CD8-positive, alpha-beta T cell (primary cell): ENCODE measurements at regions of chr6 and their contacts with region 1.

Region 1: DNA sequence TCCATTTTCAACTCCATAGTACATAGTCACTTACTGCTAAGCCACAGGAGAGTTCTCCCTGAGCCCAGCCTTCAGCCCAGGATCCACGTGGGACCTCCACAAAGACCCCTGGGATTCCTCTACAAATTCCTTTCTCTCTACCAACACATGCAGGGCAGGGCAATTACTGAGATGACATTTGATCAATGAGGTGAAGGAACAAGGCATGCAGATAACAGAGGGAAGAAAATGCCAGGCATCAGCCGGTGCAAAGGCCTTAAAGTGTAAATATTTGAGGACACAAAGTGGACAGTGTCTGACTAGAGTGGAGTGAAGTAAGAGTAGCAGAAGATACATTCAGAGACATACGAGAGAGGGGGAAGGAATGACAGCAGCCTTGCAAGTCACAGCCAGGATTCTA is 70.2 kb downstream of the HS3ST5 start:
- DNase-seq: no peak
- ATAC-seq: no peak
- H3K4me3 ChIP-seq: no peak overlapping the region
- H3K4me3 Mint-ChIP-seq: no peak overlapping the region
- H3K27ac ChIP-seq: no peak overlapping the region
- H3K27ac Mint-ChIP-seq: no peak overlapping the region
- H3K4me1 ChIP-seq: no peaks in the 10 kb centered on the region
- H3K4me1 Mint-ChIP-seq: no peaks in the 10 kb centered on the region
- H3K27me3 ChIP-seq: no peaks in the 10 kb centered on the region
- H3K27me3 Mint-ChIP-seq: no peaks in the 10 kb centered on the region
- CTCF ChIP-seq: no peak

Region 2: DNA sequence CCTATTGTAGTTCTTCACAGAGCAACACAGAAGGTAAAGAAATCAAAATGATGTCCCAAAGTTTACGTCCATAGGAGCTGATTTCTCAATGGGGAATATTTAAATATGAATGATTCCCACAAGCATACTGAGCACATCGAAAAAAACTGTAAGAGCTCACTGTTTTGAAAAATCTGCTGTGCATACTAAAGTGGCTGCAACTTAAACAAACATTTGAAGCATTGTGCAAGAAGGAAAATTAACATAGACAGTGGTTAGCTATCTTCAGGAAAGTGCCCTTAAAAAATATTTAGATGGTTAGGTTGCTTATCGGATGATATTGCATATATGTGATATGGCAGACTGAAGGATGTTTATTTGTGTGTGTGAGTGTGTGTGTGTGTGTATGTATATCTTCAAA is 1177.8 kb before region 1 on chr6:
- CTCF ChIA-PET with region 1: no interaction called
- POLR2A ChIA-PET with region 1: no interaction called
- intact Hi-C with region 1: loop called in 1 of 2 experiments (anchors 5 kb)
- DNase-seq: no peak
- ATAC-seq: no peak
- H3K4me3 ChIP-seq: no peak overlapping the region
- H3K4me3 Mint-ChIP-seq: no peak overlapping the region
- H3K27ac ChIP-seq: no peak overlapping the region
- H3K27ac Mint-ChIP-seq: no peak overlapping the region
- H3K4me1 ChIP-seq: no peaks in the 10 kb centered on the region
- H3K4me1 Mint-ChIP-seq: no peaks in the 10 kb centered on the region
- H3K27me3 ChIP-seq: no peaks in the 10 kb centered on the region
- H3K27me3 Mint-ChIP-seq: no peaks in the 10 kb centered on the region
- CTCF ChIP-seq: no peak

Region 3: GRCh38 chr6:114354482-114354881 is 81.9 kb after region 1 on chr6:
- CTCF ChIA-PET with region 1: no interaction called
- POLR2A ChIA-PET with region 1: no interaction called
- intact Hi-C with region 1: no loop called
- DNase-seq: no peak
- ATAC-seq: no peak
- H3K4me3 ChIP-seq: no peak overlapping the region
- H3K4me3 Mint-ChIP-seq: no peak overlapping the region
- H3K27ac ChIP-seq: no peak overlapping the region
- H3K27ac Mint-ChIP-seq: no peak overlapping the region
- H3K4me1 ChIP-seq: no peaks in the 10 kb centered on the region
- H3K4me1 Mint-ChIP-seq: no peaks in the 10 kb centered on the region
- H3K27me3 ChIP-seq: no peaks in the 10 kb centered on the region
- H3K27me3 Mint-ChIP-seq: peaks cover 2% of the 10 kb centered on the region
- CTCF ChIP-seq: no peak